Activated B cell treated with CpG ODN at 0.5 μM for 24 hours (primary cell): ENCODE measurements at regions of chr5 and their contacts with region 1.

Region 1: DNA sequence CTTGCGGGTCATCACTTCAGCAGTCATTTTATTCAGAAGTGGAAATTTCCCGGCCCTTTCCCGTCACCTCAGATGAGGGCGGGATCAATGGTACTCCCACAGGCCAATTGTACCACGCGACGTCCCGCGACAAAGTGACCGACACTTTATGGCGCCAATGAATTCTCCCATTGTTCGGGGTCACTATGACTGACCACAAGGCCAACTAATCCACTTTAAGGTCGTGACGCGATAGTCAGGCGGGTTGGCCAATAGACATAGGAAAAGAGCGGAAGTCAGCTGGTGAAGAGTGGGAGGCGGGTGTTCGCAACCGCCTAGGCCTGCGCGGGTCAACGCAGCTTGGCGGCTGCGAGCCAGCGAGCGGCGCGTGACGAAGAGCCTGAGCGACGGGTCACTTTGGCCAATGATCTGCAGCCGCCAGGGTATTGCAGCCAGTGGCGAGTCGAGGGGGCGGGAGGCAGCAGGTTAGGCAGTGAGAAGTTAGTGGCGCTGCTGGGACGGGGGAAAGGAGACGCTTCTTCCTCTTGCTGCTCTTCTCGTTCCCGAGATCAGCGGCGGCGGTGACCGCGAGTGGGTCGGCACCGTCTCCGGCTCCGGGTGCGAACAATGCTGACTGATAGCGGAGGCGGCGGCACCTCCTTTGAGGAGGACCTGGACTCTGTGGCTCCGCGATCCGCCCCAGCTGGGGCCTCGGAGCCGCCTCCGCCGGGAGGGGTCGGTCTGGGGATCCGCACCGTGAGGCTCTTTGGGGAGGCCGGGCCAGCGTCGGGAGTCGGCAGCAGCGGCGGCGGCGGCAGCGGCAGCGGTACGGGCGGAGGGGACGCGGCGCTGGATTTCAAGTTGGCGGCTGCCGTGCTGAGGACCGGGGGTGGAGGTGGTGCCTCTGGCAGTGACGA is at the start of gene ANKHD1:
- DNase-seq: peak; percentile 90
- ATAC-seq: peak; percentile 79
- H3K4me3 Mint-ChIP-seq: no peak within 1 kb of the TSS
- H3K27ac Mint-ChIP-seq: no peak within 1 kb of the TSS
- H3K4me1 Mint-ChIP-seq: peaks cover 38% of the 10 kb centered on the region
- H3K27me3 Mint-ChIP-seq: no peaks in the 10 kb centered on the region
- CTCF ChIP-seq: no peak
- total RNA-seq, gene ANKHD1: 166 and 187 TPM in 2 replicates

Region 2: DNA sequence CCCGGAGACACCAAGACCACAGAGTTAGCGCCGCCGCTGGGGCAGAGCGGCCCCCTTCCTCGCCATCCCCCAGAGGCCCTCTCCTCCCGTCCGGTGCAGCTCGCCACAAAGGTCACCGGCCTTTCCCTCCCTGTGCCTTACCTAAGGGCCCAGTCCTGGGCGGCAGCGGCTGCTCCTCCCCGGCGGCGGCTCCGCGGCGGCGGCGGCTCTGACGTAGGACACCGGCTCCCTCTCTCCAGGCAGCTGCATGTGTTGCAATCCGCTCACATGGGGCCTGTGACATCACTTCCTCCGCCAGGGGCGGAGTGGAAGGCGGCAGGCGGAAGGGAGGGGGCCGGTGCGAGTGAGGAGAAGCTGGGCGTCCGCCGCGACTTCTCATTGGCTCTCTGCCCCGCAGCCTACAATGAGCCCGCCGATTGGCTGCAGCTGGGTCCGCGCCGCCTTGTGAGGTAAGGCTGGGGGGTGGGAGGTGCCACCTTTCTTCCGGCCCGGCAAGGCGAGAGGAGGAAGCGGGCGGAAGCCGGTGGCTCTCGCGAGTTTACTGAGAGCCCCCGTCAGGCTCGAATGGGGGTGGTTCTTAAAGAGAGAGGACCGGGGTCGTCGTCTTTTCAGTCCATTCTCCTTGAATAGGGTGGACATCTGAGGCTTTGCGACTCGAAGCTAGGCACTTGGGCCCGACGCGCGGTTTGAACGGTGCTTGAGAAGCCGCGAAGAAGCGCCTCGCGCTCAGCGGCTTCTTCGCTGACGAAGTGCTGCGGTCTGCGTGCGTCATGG is 1858.5 kb before region 1 on chr5 and contains the start of gene ETF1:
- CTCF ChIA-PET with region 1: no interaction called
- POLR2A ChIA-PET with region 1: interaction called, 3 read pairs
- intact Hi-C with region 1: loop called (anchors 2 kb)
- DNase-seq: peak; percentile 97
- ATAC-seq: peak; percentile 90
- H3K4me3 Mint-ChIP-seq: peak within 1 kb of the TSS; percentile 100
- H3K27ac Mint-ChIP-seq: peak within 1 kb of the TSS; percentile 99
- H3K4me1 Mint-ChIP-seq: peaks cover 66% of the 10 kb centered on the region
- H3K27me3 Mint-ChIP-seq: no peaks in the 10 kb centered on the region
- CTCF ChIP-seq: no peak
- total RNA-seq, gene ETF1: 95.7 and 99.6 TPM in 2 replicates

Region 3: DNA sequence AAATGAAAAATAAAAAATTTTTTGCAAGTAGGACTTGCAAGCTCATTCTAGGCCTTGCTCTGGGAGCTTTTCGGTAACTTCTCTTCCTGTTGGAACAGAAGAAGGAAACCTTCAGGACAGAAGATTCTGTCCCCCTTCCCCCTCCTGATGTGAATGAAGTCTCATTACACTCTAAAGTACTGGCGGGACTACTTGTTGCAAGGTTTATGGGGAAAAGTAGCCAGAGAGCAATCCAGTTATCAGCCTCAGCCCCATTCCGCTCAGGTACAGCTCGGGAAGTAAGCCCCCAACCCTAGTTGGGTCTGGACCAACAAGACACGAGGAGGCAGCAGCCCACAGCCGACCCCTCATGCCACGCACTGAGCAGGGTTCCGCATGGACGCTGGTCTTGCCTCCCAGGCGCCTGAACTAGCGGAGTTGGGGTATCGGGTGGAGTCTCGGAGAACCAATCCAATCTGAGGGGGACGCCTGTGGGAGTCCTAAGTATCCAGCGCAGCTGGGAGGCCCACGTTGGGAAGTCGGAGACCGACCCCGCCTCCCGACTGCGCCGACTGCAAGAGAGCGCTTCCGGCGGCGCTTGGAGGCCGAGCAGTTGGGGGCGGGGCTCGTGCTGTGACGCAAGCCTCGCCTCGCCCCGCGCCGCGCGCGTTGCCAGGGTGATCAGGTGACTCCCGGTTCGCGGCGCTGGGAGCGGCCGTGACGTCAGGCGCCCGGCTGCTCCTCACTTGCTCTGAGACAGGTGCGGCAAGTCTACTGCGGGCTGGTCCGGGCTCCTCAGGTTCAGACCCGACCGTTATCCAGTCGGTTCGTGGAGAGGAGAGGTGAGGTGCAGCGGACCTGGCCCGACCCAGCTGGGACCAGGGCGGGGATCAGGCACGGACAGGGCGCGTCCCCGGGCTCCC is 226.9 kb before region 1 on chr5 and contains the start of gene CYSTM1:
- CTCF ChIA-PET with region 1: no interaction called
- POLR2A ChIA-PET with region 1: no interaction called
- intact Hi-C with region 1: loop called (anchors 1 kb)
- DNase-seq: peak; percentile 96
- ATAC-seq: peak; percentile 83
- H3K4me3 Mint-ChIP-seq: peak within 1 kb of the TSS; percentile 93
- H3K27ac Mint-ChIP-seq: peak within 1 kb of the TSS; percentile 89
- H3K4me1 Mint-ChIP-seq: peaks cover 15% of the 10 kb centered on the region
- H3K27me3 Mint-ChIP-seq: no peaks in the 10 kb centered on the region
- CTCF ChIP-seq: no peak
- total RNA-seq, gene CYSTM1: 20.1 and 23.3 TPM in 2 replicates

Region 4: GRCh38 chr5:140357726-140358093 is 43.9 kb before region 1 on chr5:
- CTCF ChIA-PET with region 1: no interaction called
- POLR2A ChIA-PET with region 1: no interaction called
- intact Hi-C with region 1: no loop called
- DNase-seq: peak; percentile 60
- ATAC-seq: peak; percentile 99
- H3K4me3 Mint-ChIP-seq: peak overlapping the region; percentile 44
- H3K27ac Mint-ChIP-seq: no peak overlapping the region
- H3K4me1 Mint-ChIP-seq: peaks cover 9% of the 10 kb centered on the region
- H3K27me3 Mint-ChIP-seq: peaks cover 3% of the 10 kb centered on the region
- CTCF ChIP-seq: no peak

Region 5: DNA sequence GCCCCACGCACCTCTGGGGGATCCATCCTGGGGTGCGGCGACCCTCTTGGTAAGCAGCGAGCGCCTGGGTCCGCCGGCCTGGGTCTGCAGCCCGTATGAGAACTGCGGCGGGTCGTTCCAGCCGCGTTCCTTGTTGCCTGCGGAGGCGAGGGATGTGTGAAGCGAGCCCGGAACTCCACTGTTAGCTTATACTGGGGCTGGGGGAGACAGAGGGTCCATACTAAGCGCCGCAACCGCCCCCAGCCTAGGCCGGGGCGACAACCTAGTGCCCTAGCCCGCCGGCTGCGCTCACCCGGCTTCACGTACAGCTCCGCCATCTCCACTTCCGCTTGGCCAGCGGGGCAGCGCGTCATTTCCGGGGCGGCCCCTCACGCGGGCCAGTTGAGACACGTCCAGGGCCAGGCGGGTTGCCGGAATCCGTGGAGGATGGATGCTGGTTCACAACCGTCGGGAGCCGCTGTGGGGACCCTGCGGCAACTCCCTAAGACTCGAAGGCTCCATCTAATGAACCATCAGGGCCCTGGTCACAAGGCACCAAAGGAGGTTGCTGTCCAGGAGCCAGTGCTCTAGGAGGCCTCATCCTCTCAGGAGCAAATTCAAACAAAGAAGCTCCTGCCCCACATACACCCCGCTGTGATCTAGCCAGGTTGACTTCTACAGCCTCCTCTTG is 155.7 kb after region 1 on chr5 and contains the start of gene SRA1:
- CTCF ChIA-PET with region 1: no interaction called
- POLR2A ChIA-PET with region 1: interaction called, 9 read pairs
- intact Hi-C with region 1: loop called (anchors 2 kb)
- DNase-seq: peak; percentile 88
- ATAC-seq: peak; percentile 97
- H3K4me3 Mint-ChIP-seq: peak within 1 kb of the TSS; percentile 93
- H3K27ac Mint-ChIP-seq: peak within 1 kb of the TSS; percentile 89
- H3K4me1 Mint-ChIP-seq: peaks cover 55% of the 10 kb centered on the region
- H3K27me3 Mint-ChIP-seq: no peaks in the 10 kb centered on the region
- CTCF ChIP-seq: no peak
- total RNA-seq, gene SRA1: 41.1 and 41.8 TPM in 2 replicates

Region 6: GRCh38 chr5:140647042-140647341 is 245.4 kb after region 1 on chr5:
- CTCF ChIA-PET with region 1: no interaction called
- POLR2A ChIA-PET with region 1: interaction called, 43 read pairs
- intact Hi-C with region 1: loop called (anchors 1 kb)
- DNase-seq: no peak
- ATAC-seq: no peak
- H3K4me3 Mint-ChIP-seq: peak overlapping the region; percentile 99
- H3K27ac Mint-ChIP-seq: peak overlapping the region; percentile 98
- H3K4me1 Mint-ChIP-seq: peaks cover 38% of the 10 kb centered on the region
- H3K27me3 Mint-ChIP-seq: no peaks in the 10 kb centered on the region
- CTCF ChIP-seq: no peak

Region 7: GRCh38 chr5:140700177-140701144 is 298.9 kb after region 1 on chr5 and contains the start of gene ZMAT2:
- CTCF ChIA-PET with region 1: no interaction called
- POLR2A ChIA-PET with region 1: interaction called, 10 read pairs
- intact Hi-C with region 1: loop called (anchors 1 kb)
- DNase-seq: peak; percentile 77
- ATAC-seq: peak; percentile 100
- H3K4me3 Mint-ChIP-seq: peak within 1 kb of the TSS; percentile 98
- H3K27ac Mint-ChIP-seq: peak within 1 kb of the TSS; percentile 92
- H3K4me1 Mint-ChIP-seq: peaks cover 25% of the 10 kb centered on the region
- H3K27me3 Mint-ChIP-seq: no peaks in the 10 kb centered on the region
- CTCF ChIP-seq: no peak
- total RNA-seq, gene ZMAT2: 67.8 and 70.2 TPM in 2 replicates